Activated CD8-positive, alpha-beta T cell treated with anti-CD3 and anti-CD28 coated beads for 36 hours (primary cell): ENCODE measurements at regions of chr19 and their contacts with region 1.

Region 1: GRCh38 chr19:46704379-46705076 is 12.4 kb downstream of the PRKD2 start:
- DNase-seq: peak; percentile 94
- ATAC-seq: peak; percentile 98
- H3K4me3 Mint-ChIP-seq: no peak overlapping the region
- H3K27ac Mint-ChIP-seq: peak overlapping the region; percentile 57
- H3K4me1 Mint-ChIP-seq: peaks cover 7% of the 10 kb centered on the region
- H3K27me3 Mint-ChIP-seq: no peaks in the 10 kb centered on the region
- CTCF ChIP-seq: peak; percentile 95

Region 2: DNA sequence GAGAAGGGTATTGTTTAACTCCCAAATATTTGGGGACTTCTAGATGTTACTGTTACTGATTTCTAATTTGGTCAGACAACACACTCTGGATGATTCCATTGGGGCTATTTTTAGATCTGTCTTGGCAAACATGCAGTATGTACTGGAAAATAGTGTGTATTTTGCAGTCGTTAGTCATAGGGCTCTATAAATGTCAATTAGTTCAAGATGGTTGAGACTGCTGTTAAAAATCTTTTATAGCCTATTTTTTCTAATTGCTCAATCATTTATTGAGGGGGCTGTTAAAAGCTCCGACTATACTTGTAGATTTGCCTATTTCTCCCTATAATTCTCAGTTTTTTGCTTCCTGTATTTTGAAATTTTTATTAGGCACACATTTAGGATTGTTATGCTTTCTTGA is 326.3 kb before region 1 on chr19:
- CTCF ChIA-PET with region 1: no interaction called
- POLR2A ChIA-PET with region 1: no interaction called
- intact Hi-C with region 1: no loop called
- DNase-seq: no peak
- ATAC-seq: no peak
- H3K4me3 Mint-ChIP-seq: no peak overlapping the region
- H3K27ac Mint-ChIP-seq: no peak overlapping the region
- H3K4me1 Mint-ChIP-seq: peaks cover 5% of the 10 kb centered on the region
- H3K27me3 Mint-ChIP-seq: no peaks in the 10 kb centered on the region
- CTCF ChIP-seq: no peak

Region 3: DNA sequence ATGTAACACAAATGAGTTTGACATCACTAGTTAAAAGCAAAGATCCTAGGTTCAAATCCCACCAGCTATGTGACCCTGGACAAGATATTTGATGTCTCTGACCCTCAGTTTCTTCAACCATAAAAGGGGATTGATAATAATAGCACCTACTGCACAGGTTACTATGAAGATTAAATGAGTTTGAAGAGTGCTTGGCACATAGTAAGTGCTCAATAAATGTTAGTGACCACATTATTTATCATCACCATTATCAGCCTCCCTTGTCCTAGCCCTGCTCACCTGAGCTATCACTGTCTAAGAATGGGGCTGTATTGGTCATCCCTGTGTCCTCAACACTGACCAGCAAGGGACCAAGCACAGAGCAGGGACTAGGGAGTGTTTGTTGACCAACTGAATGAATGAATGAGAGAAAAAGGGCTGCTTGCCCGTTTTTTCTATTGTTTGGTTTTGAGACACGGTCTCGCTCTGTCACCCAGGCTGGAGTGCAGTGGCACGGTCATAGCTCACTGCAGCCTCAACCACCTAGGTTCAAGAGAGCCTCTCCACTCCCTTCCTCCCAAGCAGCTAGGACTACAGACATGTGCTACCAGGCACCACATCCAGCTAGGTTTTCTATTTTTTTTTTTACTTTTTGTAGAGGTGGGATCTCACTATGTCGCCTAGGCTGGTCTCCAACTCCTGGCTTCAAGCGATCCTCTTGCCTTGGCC is 16.9 kb before region 1 on chr19:
- CTCF ChIA-PET with region 1: interaction called, 18 read pairs
- POLR2A ChIA-PET with region 1: interaction called, 6 read pairs
- intact Hi-C with region 1: no loop called
- DNase-seq: no peak
- ATAC-seq: no peak
- H3K4me3 Mint-ChIP-seq: no peak overlapping the region
- H3K27ac Mint-ChIP-seq: no peak overlapping the region
- H3K4me1 Mint-ChIP-seq: no peaks in the 10 kb centered on the region
- H3K27me3 Mint-ChIP-seq: no peaks in the 10 kb centered on the region
- CTCF ChIP-seq: no peak

Region 4: DNA sequence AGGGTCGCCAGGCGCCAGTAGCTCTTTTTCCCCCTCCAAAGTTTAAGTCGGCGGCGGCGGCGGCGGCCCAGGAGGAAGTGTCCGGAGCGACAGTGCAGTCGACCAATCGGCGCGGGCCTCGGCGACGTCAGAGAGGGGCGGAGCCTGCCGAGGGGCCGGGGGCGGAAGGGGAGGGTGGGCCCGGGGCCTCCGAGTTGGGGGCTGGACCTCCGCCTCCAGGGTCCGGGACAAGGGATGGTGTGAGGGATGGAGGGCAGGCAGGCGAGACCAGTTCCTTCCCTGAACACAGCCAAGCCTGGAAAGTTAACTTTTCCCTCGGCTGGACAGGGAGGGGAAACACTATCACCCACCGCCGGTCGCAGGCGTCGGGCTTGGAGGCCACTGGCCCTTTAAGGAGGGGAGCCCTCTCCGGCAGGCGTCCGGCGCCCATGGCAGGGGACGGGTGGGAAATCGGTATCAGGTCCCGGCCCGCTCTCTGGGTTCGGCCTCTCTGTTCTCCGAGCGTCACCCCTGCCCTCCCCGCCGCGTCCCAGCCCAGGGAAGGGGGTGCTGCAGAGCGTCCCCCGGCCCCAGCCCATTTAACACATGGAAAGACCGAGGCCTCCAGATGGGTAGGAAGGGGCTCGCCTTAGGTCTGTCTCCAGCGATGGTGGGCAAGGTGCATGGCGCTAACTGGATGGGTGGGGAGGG is 12.7 kb after region 1 on chr19 and contains the start of gene PRKD2:
- CTCF ChIA-PET with region 1: interaction called, 75 read pairs
- POLR2A ChIA-PET with region 1: interaction called, 5 read pairs
- intact Hi-C with region 1: no loop called
- DNase-seq: peak; percentile 92
- ATAC-seq: peak; percentile 62
- H3K4me3 Mint-ChIP-seq: peak within 1 kb of the TSS; percentile 86
- H3K27ac Mint-ChIP-seq: peak within 1 kb of the TSS; percentile 94
- H3K4me1 Mint-ChIP-seq: peaks cover 38% of the 10 kb centered on the region
- H3K27me3 Mint-ChIP-seq: no peaks in the 10 kb centered on the region
- CTCF ChIP-seq: no peak
- total RNA-seq, gene PRKD2: 81.1 to 86.0 TPM

Region 5: GRCh38 chr19:46753420-46754155 is 49.1 kb after region 1 on chr19:
- CTCF ChIA-PET with region 1: interaction called, 16 read pairs
- POLR2A ChIA-PET with region 1: interaction called, 3 read pairs
- intact Hi-C with region 1: no loop called
- DNase-seq: peak; percentile 85
- ATAC-seq: peak; percentile 92
- H3K4me3 Mint-ChIP-seq: no peak overlapping the region
- H3K27ac Mint-ChIP-seq: no peak overlapping the region
- H3K4me1 Mint-ChIP-seq: peaks cover 8% of the 10 kb centered on the region
- H3K27me3 Mint-ChIP-seq: no peaks in the 10 kb centered on the region
- CTCF ChIP-seq: peak; percentile 13

Region 6: GRCh38 chr19:46802152-46802551 is 97.6 kb after region 1 on chr19:
- CTCF ChIA-PET with region 1: no interaction called
- POLR2A ChIA-PET with region 1: no interaction called
- intact Hi-C with region 1: no loop called
- DNase-seq: no peak
- ATAC-seq: no peak
- H3K4me3 Mint-ChIP-seq: no peak overlapping the region
- H3K27ac Mint-ChIP-seq: no peak overlapping the region
- H3K4me1 Mint-ChIP-seq: no peaks in the 10 kb centered on the region
- H3K27me3 Mint-ChIP-seq: no peaks in the 10 kb centered on the region
- CTCF ChIP-seq: no peak